GM23248 (cell line): ENCODE measurements at regions of chr2 and their contacts with region 1.

Region 1: DNA sequence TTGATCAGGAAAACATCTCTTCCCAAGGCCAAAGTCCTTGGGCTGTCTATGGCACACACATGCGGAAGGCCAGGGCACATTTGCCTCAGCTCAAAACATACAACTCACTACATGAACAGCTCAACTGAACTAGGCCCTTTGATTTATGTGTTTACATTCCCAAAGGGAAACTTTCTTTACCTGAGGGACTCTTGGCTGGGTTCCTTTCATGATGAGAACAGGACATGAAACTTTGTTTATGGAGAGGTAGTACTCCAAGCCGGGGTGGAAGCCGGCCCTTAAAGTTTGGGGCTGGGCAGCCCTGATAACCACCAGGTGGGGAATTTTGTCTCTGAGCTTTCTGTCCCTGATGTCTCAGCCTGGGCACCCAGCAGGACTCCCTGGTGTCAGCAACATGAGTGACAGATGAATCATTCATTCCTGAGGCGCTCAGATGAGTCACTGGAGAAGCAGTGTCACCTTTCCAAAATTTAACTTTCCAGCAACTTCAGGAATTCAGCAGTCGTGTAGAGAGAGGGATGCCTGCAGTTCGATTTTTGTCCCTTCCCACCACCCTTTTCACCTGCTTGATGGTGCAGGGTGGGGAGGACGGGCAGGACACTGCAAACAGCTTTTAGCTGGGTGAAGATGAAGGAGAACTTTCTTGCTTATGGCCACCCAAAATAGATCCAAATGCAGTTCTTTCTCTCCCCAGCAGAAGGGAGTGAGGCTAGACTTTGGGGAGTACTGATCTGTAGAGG is 331.5 kb downstream of the DYSF start:
- DNase-seq: peak; percentile 85
- H3K4me3 ChIP-seq: no peak overlapping the region
- H3K27ac ChIP-seq: no peak overlapping the region
- H3K4me1 ChIP-seq: peaks cover 26% of the 10 kb centered on the region
- H3K27me3 ChIP-seq: no peaks in the 10 kb centered on the region

Region 2: DNA sequence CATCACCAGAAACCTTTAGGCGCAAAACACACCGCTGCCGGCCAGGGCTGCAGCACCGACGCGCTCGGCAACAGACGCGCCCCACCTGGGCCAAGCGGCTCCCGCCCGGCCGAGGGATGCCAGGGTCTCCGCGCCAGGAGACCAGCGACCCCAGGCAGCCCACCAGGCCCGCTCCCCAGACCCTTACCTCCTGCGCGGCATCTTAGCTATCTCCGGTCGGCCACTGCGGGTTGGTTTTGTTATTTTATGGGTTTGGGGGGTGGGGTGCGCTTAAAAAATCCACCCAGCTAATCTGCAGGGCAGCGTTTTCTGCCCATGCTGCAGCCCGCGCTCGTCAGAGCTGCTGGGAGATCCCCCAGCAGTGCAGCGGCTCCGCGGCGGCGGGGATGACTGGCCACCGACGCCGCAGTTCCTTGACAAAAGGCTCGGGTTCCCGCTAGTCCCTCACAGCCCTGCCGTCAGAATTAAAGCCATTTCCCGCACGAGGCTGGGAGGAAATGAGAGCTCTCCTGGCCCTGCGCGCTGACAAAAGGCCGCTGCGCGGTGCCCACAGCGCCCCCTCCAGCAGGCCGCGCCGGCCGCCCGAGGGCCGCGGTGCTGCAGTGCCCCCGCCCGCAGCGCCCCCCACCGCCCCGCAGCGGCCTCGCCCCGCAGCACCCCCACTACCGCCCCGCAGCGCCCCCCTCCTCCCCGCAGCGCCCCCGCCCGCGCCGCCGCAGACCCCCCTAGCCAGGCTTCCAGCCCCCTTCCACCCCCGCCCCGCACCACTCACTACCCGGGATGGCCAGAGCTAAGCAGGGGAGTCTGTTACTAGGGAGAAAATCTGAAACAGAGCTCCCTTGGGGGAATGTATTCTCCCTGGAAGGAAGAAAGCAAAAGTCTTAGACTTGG is 1017.0 kb before region 1 on chr2 and contains the start of gene ADD2:
- in situ Hi-C with region 1: no loop called
- DNase-seq: peak; percentile 61
- H3K4me3 ChIP-seq: peak within 1 kb of the TSS; percentile 42
- H3K27ac ChIP-seq: no peak within 1 kb of the TSS
- H3K4me1 ChIP-seq: no peaks in the 10 kb centered on the region
- H3K27me3 ChIP-seq: peaks cover 89% of the 10 kb centered on the region
- total RNA-seq, gene ADD2: under 0.01 TPM in 1 of 2 replicates, not detected in the other

Region 3: GRCh38 chr2:71609958-71610357 is 174.9 kb before region 1 on chr2:
- in situ Hi-C with region 1: loop called (anchors 10 kb)
- DNase-seq: peak; percentile 63
- H3K4me3 ChIP-seq: no peak overlapping the region
- H3K27ac ChIP-seq: no peak overlapping the region
- H3K4me1 ChIP-seq: peaks cover 9% of the 10 kb centered on the region; the same call in 1 of the 2 replicates
- H3K27me3 ChIP-seq: no peaks in the 10 kb centered on the region; the same call in 1 of the 2 replicates

Region 4: DNA sequence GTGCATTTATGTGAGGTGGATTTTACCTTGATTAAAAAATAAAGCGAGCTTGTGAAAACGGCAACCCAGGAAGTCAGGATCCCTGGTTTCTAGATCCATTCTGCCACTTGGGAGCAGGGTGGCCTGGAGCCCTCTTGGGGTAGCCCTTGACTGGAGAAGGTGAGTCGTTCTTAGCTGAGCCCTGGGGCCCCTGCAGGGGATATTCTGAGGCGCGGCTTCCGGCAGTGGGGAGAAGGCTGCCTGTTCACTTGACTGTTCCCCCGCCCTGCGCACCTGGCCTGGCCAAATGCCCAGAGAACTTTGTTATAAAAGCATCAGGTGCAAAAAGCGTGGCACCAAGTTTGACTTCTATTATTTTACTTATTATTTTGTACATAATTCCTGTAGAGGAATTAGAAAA is 109.6 kb before region 1 on chr2:
- in situ Hi-C with region 1: no loop called
- DNase-seq: no peak
- H3K4me3 ChIP-seq: no peak overlapping the region
- H3K27ac ChIP-seq: no peak overlapping the region
- H3K4me1 ChIP-seq: no peaks in the 10 kb centered on the region
- H3K27me3 ChIP-seq: no peaks in the 10 kb centered on the region